H1 (cell line): ENCODE measurements at regions of chr9 and their contacts with region 1.

Region 1: GRCh38 chr9:35696525-35697215 is 6.9 kb upstream of the TPM2 start:
- DNase-seq: peak in 1 of 2 experiments; percentile 84
- H3K4me3 ChIP-seq: no peak overlapping the region
- H3K27ac ChIP-seq: no peak overlapping the region
- H3K4me1 ChIP-seq: no peaks in the 10 kb centered on the region
- H3K27me3 ChIP-seq: no peaks in the 10 kb centered on the region
- CTCF ChIP-seq: peak; percentile 85 to 97 (median 95)
- EP300 ChIP-seq: no peak
- POLR2A ChIP-seq: no peak
- RAD21 ChIP-seq: peak; percentile 65 to 70

Region 2: GRCh38 chr9:35611230-35611797 is 85.4 kb before region 1 on chr9:
- CTCF ChIA-PET with region 1: interaction called, 33 read pairs
- POLR2A ChIA-PET with region 1: interaction called, 4 read pairs
- DNase-seq: peak in 1 of 2 experiments; percentile 55
- H3K4me3 ChIP-seq: no peak overlapping the region
- H3K27ac ChIP-seq: no peak overlapping the region
- H3K4me1 ChIP-seq: peaks cover 0 to 5% (median 3%) of the 10 kb centered on the region in 4 experiments; a peak in 4 of 7 replicates
- H3K27me3 ChIP-seq: peaks cover 0 to 7% (median 5%) of the 10 kb centered on the region in 4 experiments; a peak in 4 of 7 replicates
- CTCF ChIP-seq: peak; percentile 63 to 87 (median 87)
- EP300 ChIP-seq: no peak
- POLR2A ChIP-seq: no peak
- RAD21 ChIP-seq: peak; percentile 41 to 58

Region 3: GRCh38 chr9:35646533-35647265 is 50.0 kb before region 1 on chr9:
- CTCF ChIA-PET with region 1: interaction called, 65 read pairs
- POLR2A ChIA-PET with region 1: interaction called, 13 read pairs
- DNase-seq: peak in 1 of 2 experiments; percentile 98
- H3K4me3 ChIP-seq: peak overlapping the region; percentile 56 to 79 (median 60)
- H3K27ac ChIP-seq: no peak overlapping the region
- H3K4me1 ChIP-seq: peaks cover 0 to 17% (median 12%) of the 10 kb centered on the region in 4 experiments; a peak in 5 of 7 replicates
- H3K27me3 ChIP-seq: no peaks in the 10 kb centered on the region
- CTCF ChIP-seq: peak; percentile 89 to 98 (median 93)
- EP300 ChIP-seq: no peak
- POLR2A ChIP-seq: peak in 1 of 2 experiments; percentile 66; a peak in 1 of 3 replicates
- RAD21 ChIP-seq: peak; percentile 77 to 84

Region 4: DNA sequence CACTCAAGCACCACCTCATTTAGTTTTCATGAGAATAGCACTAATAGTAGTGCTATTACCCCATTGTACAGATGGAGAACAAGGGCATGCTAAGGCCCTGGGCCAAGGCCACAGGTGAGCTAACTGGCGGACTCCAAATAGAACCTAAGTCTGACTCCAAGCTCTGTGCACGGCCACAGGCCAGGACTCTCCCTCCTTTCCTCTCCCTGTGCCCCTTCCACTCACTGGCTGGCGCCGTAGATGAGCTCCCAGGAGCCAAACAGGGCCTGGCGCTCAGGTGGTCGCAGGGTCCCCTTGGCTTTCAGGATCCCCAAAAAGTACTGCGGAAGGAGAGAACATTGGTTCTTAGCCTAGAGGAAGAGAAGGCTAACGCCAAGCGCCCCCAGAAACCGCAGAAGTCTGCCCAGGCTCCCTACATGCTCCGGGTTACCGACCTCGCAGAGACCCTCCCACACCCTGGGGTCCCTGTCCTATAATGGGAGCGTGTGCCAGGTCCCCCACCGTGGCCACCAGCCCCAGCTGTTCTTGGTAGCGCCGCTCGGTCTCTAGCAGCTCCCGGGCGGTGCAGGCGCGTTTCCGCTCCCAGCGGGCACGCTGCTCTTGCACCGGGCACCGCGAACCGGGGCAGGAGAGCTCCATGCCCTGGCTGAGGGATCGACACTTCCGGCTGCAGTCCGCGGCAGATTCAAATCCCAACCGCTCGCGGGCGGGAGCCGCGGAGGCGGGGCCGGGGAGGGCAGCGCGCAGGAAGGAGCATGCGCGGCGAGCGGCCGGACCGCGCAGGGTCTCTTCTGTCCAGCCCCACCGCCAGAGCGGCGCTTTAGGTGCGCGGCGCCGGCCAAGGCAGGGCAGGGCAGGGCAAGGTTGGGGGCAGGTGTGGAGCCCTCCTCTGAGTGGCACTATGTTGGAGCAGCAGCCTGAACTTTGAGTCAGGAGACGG is 31.9 kb before region 1 on chr9 and contains the start of gene ARHGEF39:
- CTCF ChIA-PET with region 1: interaction called, 347 read pairs
- POLR2A ChIA-PET with region 1: interaction called, 84 read pairs
- DNase-seq: peak; percentile 81 to 92
- H3K4me3 ChIP-seq: peak within 1 kb of the TSS; percentile 50 to 84 (median 78)
- H3K27ac ChIP-seq: 0 out of 2 replicates have a peak within 1 kb of the TSS, but pooled peaks have one; percentile 56
- H3K4me1 ChIP-seq: peaks cover 0 to 5% (median 1%) of the 10 kb centered on the region in 4 experiments; a peak in 5 of 7 replicates
- H3K27me3 ChIP-seq: no peaks in the 10 kb centered on the region
- CTCF ChIP-seq: peak; percentile 58 to 65 (median 60); a peak in 3 of 4 replicates
- EP300 ChIP-seq: no peak
- POLR2A ChIP-seq: peak in 1 of 2 experiments; percentile 75; a peak in 2 of 3 replicates
- RAD21 ChIP-seq: peak; percentile 41 to 44
- total RNA-seq, gene ARHGEF39: 17.5 and 18.6 TPM in 2 replicates

Region 5: GRCh38 chr9:35683323-35683722 is 13.3 kb before region 1 on chr9:
- CTCF ChIA-PET with region 1: interaction called, 77 read pairs
- POLR2A ChIA-PET with region 1: interaction called, 63 read pairs
- DNase-seq: no peak
- H3K4me3 ChIP-seq: no peak overlapping the region
- H3K27ac ChIP-seq: no peak overlapping the region
- H3K4me1 ChIP-seq: peaks cover 2 to 11% (median 5%) of the 10 kb centered on the region in 4 experiments; a peak in 6 of 7 replicates
- H3K27me3 ChIP-seq: no peaks in the 10 kb centered on the region
- CTCF ChIP-seq: no peak
- EP300 ChIP-seq: no peak
- POLR2A ChIP-seq: 0 out of 3 replicates have a peak, but pooled peaks of 1 of the 2 experiments have one; percentile 26
- RAD21 ChIP-seq: no peak

Region 6: DNA sequence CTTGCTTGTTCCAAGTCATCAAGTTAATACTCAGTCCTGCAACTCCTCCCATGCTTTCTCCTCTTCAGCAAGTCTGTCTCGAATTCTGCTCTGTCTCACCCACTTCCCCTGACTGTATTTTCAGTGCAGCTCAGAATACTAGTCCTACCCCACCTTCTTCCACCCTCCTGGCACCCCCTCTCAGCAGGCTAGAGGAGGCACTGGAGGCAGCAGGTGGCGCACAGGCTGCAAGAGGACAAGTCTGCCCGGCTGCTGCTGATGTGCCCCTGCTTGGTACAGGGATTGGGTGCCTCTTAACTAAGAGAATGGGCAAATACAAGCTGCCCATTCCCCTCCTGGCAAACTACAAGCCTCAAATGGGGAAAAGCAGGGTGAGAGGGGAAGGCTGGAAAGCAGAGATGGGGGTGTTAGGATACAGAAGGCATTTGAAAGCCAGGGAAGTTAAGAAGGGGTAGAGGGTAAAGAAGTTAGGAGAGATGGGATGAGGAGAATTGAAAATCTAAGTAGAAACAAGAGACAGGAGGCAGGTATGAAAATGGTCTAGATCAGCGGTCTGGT is 30.3 kb after region 1 on chr9:
- CTCF ChIA-PET with region 1: interaction called, 95 read pairs
- POLR2A ChIA-PET with region 1: interaction called, 158 read pairs
- DNase-seq: no peak
- H3K4me3 ChIP-seq: no peak overlapping the region
- H3K27ac ChIP-seq: 0 out of 2 replicates have a peak overlapping the region, but pooled peaks have one; percentile 33
- H3K4me1 ChIP-seq: peaks cover 21 to 42% (median 30%) of the 10 kb centered on the region in 4 experiments
- H3K27me3 ChIP-seq: no peaks in the 10 kb centered on the region
- CTCF ChIP-seq: peak in 1 of 3 experiments; percentile 2; a peak in 1 of 4 replicates
- EP300 ChIP-seq: no peak
- POLR2A ChIP-seq: no peak
- RAD21 ChIP-seq: no peak